ENCODE measurements at regions of chr19 and their contacts with region 1.

Region 1: DNA sequence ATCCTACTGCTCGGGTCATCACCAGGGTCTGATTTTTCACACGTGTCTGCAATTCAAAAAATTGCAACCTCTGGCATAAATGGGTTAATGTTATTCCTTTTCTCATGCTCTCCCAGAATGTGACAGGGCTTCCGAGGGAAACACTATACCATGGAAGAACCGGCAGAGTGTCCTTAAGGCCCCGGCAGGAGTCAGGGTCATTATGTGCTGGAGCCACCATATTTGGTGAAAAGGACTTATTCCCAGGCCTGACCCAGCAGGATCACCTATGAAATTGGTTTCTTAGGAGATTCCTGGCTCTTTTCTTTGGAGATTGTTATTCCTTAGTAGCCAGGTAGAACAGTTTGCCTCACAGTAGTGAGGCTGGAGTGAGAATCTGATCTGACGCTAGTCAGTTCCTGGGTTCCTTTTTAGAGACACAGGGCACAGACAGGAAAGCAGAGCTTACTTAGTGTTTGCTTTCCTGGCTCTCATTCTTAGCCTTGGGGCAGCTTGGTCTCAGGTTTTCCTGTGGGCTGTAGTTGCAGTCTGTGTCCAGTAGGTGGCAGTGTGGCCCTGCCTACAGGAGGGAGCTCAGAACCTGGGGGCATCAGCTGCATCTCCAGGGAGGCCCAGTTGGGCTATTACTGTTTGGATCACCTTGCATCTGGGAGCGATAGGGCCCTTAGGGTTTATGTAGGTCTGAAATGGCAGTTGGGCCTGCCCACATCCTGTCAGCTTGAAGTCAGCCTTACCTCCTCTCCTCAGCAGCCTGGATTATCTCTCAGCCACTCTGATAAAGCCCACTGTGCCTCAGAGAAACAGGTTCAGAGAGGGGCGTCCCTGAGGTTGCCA is 12.4 kb downstream of the SNRNP70 start:
- DNase-seq: peak; percentile 59
- H3K27ac ChIP-seq: peak overlapping the region; percentile 9
- CTCF ChIP-seq: peak; percentile 94

Region 2: DNA sequence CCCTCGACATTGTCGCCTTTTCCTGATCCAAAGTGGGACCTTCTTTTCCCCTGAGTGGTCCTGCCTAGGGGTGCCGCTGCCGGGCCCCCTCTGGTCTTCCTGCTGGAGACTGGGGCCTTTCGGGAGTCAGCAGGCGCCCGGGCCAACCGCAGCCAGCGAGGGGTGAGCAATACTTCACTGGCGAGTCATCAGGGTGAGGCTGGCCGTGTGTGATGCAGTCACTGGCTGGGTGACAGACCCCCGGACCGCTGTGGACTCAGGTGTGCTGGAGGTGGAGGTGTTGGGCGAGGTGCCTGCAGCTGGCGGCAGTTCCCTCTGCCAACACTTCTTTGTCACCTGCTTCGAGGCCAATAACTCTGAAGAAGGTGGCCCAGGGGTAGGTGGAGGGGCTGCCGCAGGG is 55.5 kb before region 1 on chr19:
- CTCF ChIA-PET with region 1: no interaction called
- POLR2A ChIA-PET with region 1: no interaction called
- DNase-seq: no peak
- H3K27ac ChIP-seq: no peak overlapping the region
- CTCF ChIP-seq: no peak

Region 3: DNA sequence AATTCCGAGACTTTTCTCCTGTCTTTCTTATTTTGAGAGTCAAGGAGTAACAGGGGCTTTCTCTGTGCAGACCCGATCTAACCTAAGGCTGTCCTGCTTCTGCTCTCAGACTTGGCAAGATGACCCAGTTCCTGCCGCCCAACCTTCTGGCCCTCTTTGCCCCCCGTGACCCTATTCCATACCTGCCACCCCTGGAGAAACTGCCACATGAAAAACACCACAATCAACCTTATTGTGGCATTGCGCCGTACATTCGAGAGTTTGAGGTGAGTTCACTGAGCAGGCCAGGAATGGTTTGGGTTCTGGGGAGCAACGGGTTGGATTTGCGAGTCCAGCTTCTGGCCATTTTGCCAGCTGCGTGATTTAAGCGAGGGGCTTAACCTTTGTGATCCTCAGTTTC is 11.4 kb before region 1 on chr19:
- CTCF ChIA-PET with region 1: interaction called, 16 read pairs
- POLR2A ChIA-PET with region 1: no interaction called
- DNase-seq: no peak
- H3K27ac ChIP-seq: peak overlapping the region; percentile 84
- CTCF ChIP-seq: no peak

Region 4: DNA sequence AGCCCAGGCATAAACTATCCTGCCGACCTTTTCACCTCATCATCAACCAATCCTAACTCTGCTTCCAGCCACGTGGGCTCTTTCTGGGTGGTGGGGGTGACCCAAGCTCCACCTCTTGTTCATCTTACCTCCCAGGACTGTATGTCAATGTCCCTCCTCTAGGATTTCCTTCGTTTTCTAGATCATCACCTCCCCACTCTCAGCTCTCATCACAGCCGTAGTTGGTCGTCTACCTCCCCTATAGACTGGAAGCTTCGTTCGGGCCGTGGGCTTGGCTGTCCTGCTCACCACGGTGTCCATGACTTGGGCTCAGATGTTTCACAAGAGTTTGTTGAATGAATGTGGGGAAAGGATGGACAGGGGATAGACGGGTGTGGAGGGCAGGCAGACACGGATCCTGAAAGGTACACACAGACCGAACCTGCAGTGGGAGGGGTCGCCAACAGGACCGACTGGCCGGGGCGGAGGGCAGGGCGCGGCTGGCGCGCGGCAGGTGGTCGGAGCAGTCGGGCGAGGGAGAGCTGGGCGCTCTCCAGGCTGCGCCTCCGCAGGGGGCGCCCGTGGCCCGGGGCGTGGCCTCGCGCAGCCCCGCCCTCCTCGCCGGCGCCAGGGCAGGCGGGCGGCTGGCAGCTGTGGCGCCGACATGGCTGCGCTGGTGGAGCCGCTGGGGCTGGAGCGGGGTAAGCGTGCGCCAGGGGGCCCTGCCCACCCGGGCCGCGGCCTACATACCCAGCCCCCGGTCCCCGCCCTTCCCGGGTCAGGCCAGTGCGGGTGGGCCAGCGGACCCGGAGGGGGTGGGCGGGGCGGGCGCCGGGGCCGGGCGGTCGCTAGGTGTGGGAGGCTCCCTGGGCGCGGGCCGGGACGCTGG is 16.3 kb after region 1 on chr19 and contains the start of gene LIN7B:
- CTCF ChIA-PET with region 1: interaction called, 12 read pairs
- POLR2A ChIA-PET with region 1: no interaction called
- DNase-seq: peak; percentile 76
- H3K27ac ChIP-seq: peak within 1 kb of the TSS; percentile 59
- CTCF ChIP-seq: peak; percentile 81

Region 5: GRCh38 chr19:49148784-49149651 is 51.3 kb after region 1 on chr19:
- CTCF ChIA-PET with region 1: interaction called, 14 read pairs
- POLR2A ChIA-PET with region 1: no interaction called
- DNase-seq: peak; percentile 99
- H3K27ac ChIP-seq: peak overlapping the region; percentile 87
- CTCF ChIP-seq: no peak

Region 6: DNA sequence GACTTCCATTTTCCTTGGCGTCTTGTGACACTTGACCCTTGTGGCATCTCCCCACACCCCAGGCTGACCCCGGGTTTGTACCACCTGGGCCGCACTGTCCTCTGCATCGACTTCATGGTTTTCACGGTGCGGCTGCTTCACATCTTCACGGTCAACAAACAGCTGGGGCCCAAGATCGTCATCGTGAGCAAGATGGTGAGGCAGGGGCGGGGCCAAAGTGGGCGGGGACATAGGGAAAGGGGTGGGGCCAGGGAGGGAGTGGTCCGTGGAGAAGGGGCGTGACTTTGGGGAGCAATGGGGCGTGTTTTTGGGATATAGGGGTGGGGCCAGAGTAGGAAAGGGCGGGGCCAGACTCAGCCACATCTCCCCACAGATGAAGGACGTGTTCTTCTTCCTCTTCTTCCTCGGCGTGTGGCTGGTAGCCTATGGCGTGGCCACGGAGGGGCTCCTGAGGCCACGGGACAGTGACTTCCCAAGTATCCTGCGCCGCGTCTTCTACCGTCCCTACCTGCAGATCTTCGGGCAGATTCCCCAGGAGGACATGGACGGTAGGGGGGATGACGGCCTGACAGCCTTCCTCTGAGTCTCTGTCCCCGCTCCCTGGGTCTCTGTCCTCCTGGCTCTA is 102.7 kb after region 1 on chr19:
- CTCF ChIA-PET with region 1: interaction called, 13 read pairs
- POLR2A ChIA-PET with region 1: no interaction called
- DNase-seq: peak; percentile 68
- H3K27ac ChIP-seq: no peak overlapping the region
- CTCF ChIP-seq: no peak

Region 7: GRCh38 chr19:49210108-49210900 is 112.6 kb after region 1 on chr19:
- CTCF ChIA-PET with region 1: interaction called, 13 read pairs
- POLR2A ChIA-PET with region 1: no interaction called
- DNase-seq: peak; percentile 29
- H3K27ac ChIP-seq: no peak overlapping the region
- CTCF ChIP-seq: no peak

Region 8: DNA sequence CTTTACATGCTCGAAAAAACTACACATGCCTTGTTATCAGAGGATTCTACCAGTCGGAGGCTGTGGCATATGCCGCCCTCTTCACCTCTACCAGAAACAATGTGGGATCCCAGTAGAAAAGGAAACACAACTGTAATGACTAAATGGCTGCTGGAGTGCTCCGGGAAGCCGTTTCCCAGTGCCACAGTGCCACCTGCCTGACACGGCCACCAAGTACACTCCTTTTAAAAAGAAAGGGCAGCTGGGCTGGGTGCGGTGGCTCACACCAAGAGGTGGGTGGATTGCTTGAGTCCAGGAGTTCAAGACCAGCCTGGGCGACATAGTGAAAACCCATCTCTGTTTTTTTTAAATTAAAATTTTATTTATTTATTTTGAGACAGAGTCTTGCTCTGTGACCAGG is 127.2 kb after region 1 on chr19:
- CTCF ChIA-PET with region 1: interaction called, 10 read pairs
- POLR2A ChIA-PET with region 1: no interaction called
- DNase-seq: peak; percentile 65
- H3K27ac ChIP-seq: no peak overlapping the region
- CTCF ChIP-seq: peak; percentile 38; the same call in 1 of the 2 replicates